Left ventricle myocardium inferior (tissue), 1 donor: ENCODE measurements at regions of chr9 and their contacts with region 1.

Region 1: DNA sequence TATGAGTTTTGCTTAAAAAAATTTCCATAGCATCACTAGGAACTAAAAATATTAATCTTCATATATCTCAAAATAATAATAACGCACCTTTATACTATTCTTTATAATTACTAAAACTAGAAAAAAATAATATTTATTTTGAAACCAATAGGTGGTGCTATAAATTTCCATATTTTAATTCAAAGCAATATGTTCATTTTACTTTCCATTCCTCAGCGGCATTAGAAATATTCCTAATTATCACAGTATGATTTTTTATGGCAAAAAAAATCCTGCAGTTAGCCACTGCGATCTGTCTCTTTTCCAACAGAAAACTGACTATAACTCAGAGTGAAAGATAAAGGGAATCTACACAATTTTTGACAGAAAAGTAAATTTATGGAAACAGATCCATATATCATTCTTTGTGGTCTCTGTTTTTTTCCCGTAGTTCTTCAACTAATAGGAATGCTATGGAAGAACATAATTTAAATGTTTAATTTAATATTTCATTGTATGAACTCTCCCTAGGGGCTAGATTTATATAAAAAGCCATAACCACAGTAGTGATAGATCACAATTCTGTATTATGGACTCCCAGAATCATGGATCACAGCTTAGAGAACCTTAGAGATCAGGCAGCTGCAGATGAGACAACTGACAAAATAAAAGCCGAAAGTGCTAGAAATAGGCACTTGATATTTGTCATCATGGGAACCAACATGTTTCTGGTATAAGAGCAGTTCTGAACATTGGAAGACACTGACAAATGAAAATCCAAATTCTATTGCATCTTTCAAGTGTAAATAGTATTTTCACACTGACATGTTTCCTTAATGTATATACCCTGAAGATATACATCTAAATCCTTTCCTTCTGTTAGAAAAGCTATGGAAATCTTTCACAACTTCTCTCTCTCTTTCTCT is 167.7 kb upstream of the MPDZ start:
- DNase-seq: no peak
- H3K4me3 ChIP-seq: peak overlapping the region; percentile 51
- H3K27ac ChIP-seq: peak overlapping the region; percentile 79
- H3K4me1 ChIP-seq: peaks cover 60% of the 10 kb centered on the region
- H3K27me3 ChIP-seq: no peaks in the 10 kb centered on the region
- CTCF ChIP-seq: peak; percentile 42

Region 2: DNA sequence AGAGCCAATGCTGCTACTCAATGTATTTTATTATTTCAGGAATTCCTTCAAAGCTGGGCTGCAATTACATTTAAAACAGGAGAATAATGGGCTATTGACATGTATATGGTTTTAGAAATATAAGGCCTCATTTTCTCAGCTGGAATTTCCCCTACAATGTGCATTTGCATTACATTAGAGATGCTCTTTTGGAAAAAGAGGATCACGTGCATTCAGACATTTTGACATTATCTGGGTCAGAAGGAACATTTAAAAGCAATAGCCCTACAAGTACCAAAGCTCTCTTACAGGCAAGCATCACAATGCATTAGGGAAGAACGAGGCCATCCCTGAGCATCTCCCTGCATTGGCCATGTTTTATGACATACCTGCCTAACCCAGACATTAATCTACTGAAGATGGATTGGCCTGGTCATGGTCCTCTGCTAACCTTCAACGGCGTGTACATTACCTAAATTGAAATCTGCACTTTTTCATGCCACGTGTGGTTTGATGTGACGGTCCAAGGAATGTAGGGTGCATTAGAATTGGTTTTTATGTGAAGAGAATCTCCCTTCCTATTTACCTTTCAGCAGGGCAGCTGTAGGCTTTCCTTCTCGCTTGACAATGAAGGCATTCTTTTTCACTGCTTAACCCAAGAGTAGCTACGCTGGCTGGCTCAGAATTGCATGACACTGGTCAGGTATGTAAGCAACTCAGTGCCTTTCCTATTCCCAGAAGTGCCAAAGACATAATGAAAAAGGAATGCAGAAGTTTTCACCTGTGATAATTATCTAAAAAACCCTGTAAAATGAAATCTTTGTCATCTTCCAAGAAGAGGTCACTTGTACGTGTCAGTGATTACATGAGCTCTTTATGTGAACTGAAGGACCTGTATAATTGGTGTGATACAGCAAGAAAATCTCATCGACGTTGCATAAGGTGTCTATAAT is 44.6 kb after region 1 on chr9:
- intact Hi-C with region 1: no loop called
- DNase-seq: no peak
- H3K4me3 ChIP-seq: no peak overlapping the region
- H3K27ac ChIP-seq: peak overlapping the region; percentile 50
- H3K4me1 ChIP-seq: peaks cover 13% of the 10 kb centered on the region
- H3K27me3 ChIP-seq: no peaks in the 10 kb centered on the region
- CTCF ChIP-seq: no peak

Region 3: DNA sequence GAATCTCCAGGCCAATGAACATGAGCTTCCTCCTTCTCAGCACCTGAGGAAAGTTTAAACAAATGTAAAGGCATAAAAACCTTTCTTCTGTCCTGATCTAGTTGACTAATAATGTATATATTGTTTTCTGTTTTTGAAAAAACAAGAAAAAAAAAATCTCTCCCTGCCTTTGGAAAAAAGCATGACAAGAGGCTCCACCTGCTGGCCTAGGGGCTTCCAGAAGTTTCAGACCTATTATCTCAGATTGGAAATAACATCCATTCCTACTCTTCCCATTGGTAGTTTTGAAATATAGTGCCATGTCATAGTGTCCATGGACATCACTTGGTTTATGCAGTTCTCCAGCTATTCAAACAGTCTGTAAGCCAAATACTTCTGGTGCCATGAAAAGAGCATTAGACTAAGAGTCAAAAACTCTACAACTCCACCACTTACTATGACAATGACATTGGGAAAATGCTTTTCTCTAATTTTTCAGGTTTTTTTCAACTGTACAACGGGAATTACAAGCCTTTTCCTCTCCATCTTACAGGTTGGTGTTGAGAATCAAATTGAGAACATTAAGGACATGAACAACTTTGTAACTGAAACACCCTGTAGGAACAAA is 241.9 kb after region 1 on chr9:
- intact Hi-C with region 1: loop called (anchors 10 kb)
- DNase-seq: peak; percentile 20
- H3K4me3 ChIP-seq: no peak overlapping the region
- H3K27ac ChIP-seq: peak overlapping the region; percentile 21
- H3K4me1 ChIP-seq: peaks cover 30% of the 10 kb centered on the region
- H3K27me3 ChIP-seq: no peaks in the 10 kb centered on the region
- CTCF ChIP-seq: peak; percentile 70